ENCODE measurements at regions of chr2 and their contacts with region 1.

Region 1: GRCh38 chr2:231720987-231721966 is 13.0 kb downstream of the PTMA start:
- DNase-seq: peak; percentile 74
- CTCF ChIP-seq: peak; percentile 1

Region 2: DNA sequence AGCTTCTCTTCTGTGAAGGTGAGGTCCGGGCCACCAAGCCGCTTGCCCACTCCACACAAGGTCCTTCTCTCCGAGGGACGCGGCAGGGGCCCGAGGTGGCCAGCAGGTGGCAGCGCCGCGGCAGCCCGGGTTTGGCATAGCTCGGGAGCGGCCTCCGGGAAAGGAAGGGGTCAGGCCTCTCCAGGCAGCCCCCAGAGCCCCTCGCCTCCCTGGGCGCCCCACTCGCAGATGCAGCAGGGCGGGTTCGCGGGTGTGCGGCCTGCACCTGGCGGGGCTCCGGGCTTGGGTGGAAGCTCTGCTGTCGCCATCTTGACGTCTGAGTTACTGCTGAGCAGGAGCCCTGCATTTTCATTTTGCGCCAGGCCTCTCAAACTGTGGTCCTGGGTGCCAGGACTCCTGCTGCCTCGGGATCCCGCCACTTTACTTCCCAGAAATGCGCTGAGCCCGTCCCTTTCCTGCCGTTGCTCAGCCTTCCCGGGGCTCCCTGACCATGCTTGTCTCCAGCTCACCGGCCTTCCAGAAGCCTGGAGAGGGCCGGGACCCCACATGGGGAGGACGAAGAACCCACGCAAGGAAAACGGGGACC is 238.4 kb before region 1 on chr2:
- CTCF ChIA-PET with region 1: no interaction called
- POLR2A ChIA-PET with region 1: no interaction called
- DNase-seq: peak; percentile 89
- CTCF ChIP-seq: peak; percentile 98

Region 3: GRCh38 chr2:231552752-231553151 is 168.5 kb before region 1 on chr2:
- CTCF ChIA-PET with region 1: no interaction called
- POLR2A ChIA-PET with region 1: no interaction called
- DNase-seq: no peak
- CTCF ChIP-seq: no peak

Region 4: DNA sequence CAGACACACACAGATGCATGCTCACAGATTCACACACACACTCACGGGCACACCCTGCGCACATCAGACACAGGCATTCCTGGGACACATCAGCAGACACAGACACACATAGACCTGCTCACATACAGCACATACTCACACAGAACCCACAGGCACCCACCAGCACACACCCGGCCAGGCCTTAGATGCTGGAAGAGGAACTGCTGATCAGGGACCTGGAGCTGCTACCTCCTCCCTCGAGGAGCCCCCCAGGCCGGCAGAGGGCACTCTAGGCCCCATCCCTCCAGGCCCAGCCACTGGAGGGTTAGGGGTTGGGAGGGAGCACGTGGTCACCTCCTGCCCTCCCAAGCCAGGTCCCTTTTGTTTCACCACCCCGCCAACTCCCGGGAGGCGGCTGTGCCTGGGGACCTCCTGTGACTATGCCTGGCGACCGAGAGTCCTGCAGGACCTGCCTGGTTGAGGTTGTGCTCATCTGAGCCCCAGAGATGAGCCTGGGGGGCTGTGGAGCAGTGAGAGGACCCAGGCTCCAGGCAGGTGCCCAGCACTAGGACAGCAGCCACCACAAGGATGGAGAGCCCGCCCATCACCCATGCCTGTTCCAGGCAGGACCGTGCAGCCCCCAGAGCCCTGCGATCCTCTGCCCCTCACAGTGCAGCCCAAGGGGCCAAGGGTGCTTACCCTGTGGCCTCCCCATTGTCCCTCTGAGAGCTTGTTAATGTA is 34.0 kb before region 1 on chr2:
- CTCF ChIA-PET with region 1: interaction called, 531 read pairs
- POLR2A ChIA-PET with region 1: no interaction called
- DNase-seq: peak; percentile 85
- CTCF ChIP-seq: peak; percentile 81

Region 5: DNA sequence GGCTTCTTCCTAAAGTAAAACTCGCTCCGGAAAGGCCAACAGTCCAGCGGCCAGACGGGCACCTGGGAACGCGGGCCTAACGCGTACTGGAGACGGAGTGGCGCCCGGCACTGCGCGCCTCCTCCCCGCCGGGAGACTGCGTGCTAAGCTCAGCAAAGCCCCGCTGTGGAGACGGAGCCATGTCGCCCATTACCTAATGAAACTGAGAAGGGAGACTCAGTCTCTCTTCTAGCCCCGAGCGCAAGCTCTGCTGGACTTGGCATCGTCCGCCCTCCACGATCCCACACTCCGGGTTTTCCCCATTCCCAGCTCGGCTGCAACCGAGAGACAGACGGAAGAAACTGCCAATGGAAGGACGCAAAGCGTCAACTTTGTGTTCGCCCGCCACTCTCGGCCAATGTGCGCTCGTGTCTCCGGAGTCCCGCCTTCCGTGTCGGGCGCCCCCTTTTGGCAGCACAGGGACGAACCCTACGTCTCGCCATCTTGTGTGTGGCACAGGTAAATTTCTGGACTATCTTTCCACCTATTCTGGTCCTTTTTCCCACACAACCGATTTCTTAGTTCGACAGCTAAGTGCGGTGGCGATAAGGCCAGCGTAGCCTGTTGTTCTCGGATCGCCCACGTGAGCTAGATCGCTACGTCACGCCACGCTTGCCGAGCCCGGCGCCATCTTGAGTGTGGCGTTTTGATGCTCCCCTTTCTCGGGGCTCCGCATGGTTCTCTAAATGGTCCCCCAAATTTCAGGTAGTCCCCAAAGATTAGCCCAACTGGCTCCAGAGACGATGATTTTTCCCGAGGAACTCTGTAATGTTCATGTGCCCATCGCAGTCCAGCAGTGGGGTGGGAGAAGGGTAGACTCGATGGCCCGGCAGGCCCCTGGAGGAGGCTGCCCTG is 14.3 kb before region 1 on chr2:
- CTCF ChIA-PET with region 1: interaction called, 56 read pairs
- POLR2A ChIA-PET with region 1: interaction called, 6 read pairs
- DNase-seq: peak; percentile 94
- CTCF ChIP-seq: peak; percentile 90

Region 6: GRCh38 chr2:231807020-231807419 is 85.7 kb after region 1 on chr2:
- CTCF ChIA-PET with region 1: no interaction called
- POLR2A ChIA-PET with region 1: no interaction called
- DNase-seq: no peak
- CTCF ChIP-seq: no peak

Region 7: DNA sequence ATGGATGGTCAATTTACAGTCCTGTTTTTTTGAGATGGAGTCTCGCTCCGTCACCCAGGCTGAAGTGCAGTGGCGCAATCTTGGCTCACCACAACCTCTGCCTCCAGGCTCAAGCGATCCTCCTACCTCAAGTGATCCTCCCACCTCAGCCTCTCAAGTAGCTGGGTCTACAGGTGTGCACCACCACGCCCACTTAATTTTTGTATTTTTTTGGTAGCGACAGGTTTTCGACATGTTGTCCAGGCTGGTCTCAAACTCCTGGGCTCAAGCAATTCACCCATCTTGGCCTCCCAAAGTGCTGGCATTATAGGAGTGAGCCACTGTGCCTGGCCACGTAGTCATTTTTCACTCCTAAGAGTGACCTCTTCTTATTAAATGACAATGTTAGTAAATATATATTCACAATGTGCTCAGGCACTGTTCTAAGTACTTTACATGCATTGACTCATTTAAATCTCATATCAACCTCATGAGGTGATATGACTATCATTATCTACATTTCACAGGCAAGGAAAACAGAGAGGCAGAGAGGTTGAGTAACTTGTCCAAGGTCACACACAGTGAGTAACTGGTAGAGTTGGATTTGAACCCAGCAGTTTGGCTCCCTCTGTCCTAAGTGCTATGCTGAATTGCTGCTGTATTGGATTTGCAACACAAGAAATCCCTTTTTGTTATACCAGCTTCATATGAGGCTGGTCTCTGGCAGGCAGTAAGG is 234.6 kb after region 1 on chr2:
- CTCF ChIA-PET with region 1: no interaction called
- POLR2A ChIA-PET with region 1: no interaction called
- DNase-seq: no peak
- CTCF ChIP-seq: no peak